Gastrocnemius medialis (tissue), 4 donors: ENCODE measurements at regions of chr1 and their contacts with region 1.

Region 1: GRCh38 chr1:118381197-118381869 is 196.3 kb upstream of the SPAG17 start:
- DNase-seq: no peak
- ATAC-seq: no peak
- H3K4me3 ChIP-seq: no peak overlapping the region
- H3K27ac ChIP-seq: no peak overlapping the region
- H3K4me1 ChIP-seq: no peaks in the 10 kb centered on the region
- H3K27me3 ChIP-seq: no peaks in the 10 kb centered on the region
- CTCF ChIP-seq: no peak
- POLR2A ChIP-seq: no peak

Region 2: GRCh38 chr1:118767971-118768370 is 386.6 kb after region 1 on chr1:
- in situ Hi-C with region 1: no loop called
- intact Hi-C with region 1: loop called (anchors 5 kb)
- DNase-seq: no peak
- ATAC-seq: no peak
- H3K4me3 ChIP-seq: no peak overlapping the region
- H3K27ac ChIP-seq: no peak overlapping the region
- H3K4me1 ChIP-seq: no peaks in the 10 kb centered on the region
- H3K27me3 ChIP-seq: no peaks in the 10 kb centered on the region
- CTCF ChIP-seq: no peak
- POLR2A ChIP-seq: no peak